WTC11 (cell line): ENCODE measurements at regions of chr10 and their contacts with region 1.

Region 1: GRCh38 chr10:101774589-101775272 is 1.2 kb downstream of the FGF8 start:
- DNase-seq: peak; percentile 64
- ATAC-seq: peak; percentile 6
- H3K4me3 Mint-ChIP-seq: peak overlapping the region; percentile 61
- H3K27ac Mint-ChIP-seq: no peak overlapping the region
- H3K4me1 Mint-ChIP-seq: peaks cover 50% of the 10 kb centered on the region
- H3K27me3 Mint-ChIP-seq: peaks cover 70% of the 10 kb centered on the region
- CTCF ChIP-seq: no peak

Region 2: GRCh38 chr10:101617102-101617823 is 157.5 kb before region 1 on chr10:
- CTCF ChIA-PET with region 1: interaction called, 10 read pairs
- POLR2A ChIA-PET with region 1: no interaction called
- DNase-seq: no peak
- ATAC-seq: peak; percentile 61
- H3K4me3 Mint-ChIP-seq: no peak overlapping the region
- H3K27ac Mint-ChIP-seq: peak overlapping the region; percentile 60
- H3K4me1 Mint-ChIP-seq: peaks cover 22% of the 10 kb centered on the region
- H3K27me3 Mint-ChIP-seq: no peaks in the 10 kb centered on the region
- CTCF ChIP-seq: no peak

Region 3: GRCh38 chr10:101759309-101760247 is 15.2 kb before region 1 on chr10:
- CTCF ChIA-PET with region 1: interaction called, 24 read pairs
- POLR2A ChIA-PET with region 1: interaction called, 8 read pairs
- DNase-seq: no peak
- ATAC-seq: peak; percentile 83
- H3K4me3 Mint-ChIP-seq: no peak overlapping the region
- H3K27ac Mint-ChIP-seq: no peak overlapping the region
- H3K4me1 Mint-ChIP-seq: peaks cover 19% of the 10 kb centered on the region
- H3K27me3 Mint-ChIP-seq: peaks cover 11% of the 10 kb centered on the region
- CTCF ChIP-seq: no peak

Region 4: GRCh38 chr10:101789686-101790085 is 15.0 kb after region 1 on chr10:
- CTCF ChIA-PET with region 1: no interaction called
- POLR2A ChIA-PET with region 1: no interaction called
- DNase-seq: no peak
- ATAC-seq: no peak
- H3K4me3 Mint-ChIP-seq: no peak overlapping the region
- H3K27ac Mint-ChIP-seq: peak overlapping the region; percentile 19; the same call in 1 of the 2 replicates
- H3K4me1 Mint-ChIP-seq: peaks cover 3% of the 10 kb centered on the region
- H3K27me3 Mint-ChIP-seq: no peaks in the 10 kb centered on the region
- CTCF ChIP-seq: no peak

Region 5: DNA sequence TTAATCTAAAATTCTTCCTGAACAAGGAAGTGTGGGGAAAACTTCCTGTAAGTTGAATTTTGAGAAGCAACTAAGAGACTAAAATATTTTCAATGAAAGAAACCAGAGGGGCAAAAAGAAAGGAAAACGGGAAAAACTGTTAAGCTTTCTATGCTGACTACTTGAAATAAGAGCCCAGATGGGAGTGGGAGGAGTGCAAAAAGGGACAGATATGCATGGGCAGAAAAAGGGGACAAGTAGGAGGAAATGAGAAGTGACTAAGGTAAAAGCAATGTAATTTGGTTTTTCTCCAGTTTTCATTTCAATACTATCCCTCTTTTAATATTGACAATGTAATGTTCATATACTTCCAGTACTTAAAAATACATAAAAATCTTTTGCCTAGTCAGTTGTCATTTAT is 32.4 kb after region 1 on chr10:
- CTCF ChIA-PET with region 1: no interaction called
- POLR2A ChIA-PET with region 1: no interaction called
- DNase-seq: no peak
- ATAC-seq: no peak
- H3K4me3 Mint-ChIP-seq: no peak overlapping the region
- H3K27ac Mint-ChIP-seq: no peak overlapping the region
- H3K4me1 Mint-ChIP-seq: peaks cover 3% of the 10 kb centered on the region; the same call in 1 of the 2 replicates
- H3K27me3 Mint-ChIP-seq: no peaks in the 10 kb centered on the region
- CTCF ChIP-seq: no peak

Region 6: GRCh38 chr10:101818119-101818871 is 43.6 kb after region 1 on chr10 and contains the start of gene OGA:
- CTCF ChIA-PET with region 1: no interaction called
- POLR2A ChIA-PET with region 1: interaction called, 11 read pairs
- DNase-seq: peak; percentile 98
- ATAC-seq: peak; percentile 91
- H3K4me3 Mint-ChIP-seq: peak within 1 kb of the TSS; percentile 88
- H3K27ac Mint-ChIP-seq: peak within 1 kb of the TSS; percentile 98
- H3K4me1 Mint-ChIP-seq: peaks cover 26% of the 10 kb centered on the region
- H3K27me3 Mint-ChIP-seq: no peaks in the 10 kb centered on the region
- CTCF ChIP-seq: no peak
- total RNA-seq, gene OGA: 110 to 111 TPM (median 110 TPM) in 3 replicates